ENCODE measurements at regions of chr5 and their contacts with region 1.

Region 1: GRCh38 chr5:11733185-11734184 is 170.8 kb downstream of the CTNND2 start:
- DNase-seq: no peak
- H3K4me3 ChIP-seq: no peak overlapping the region
- CTCF ChIP-seq: no peak

Region 2: DNA sequence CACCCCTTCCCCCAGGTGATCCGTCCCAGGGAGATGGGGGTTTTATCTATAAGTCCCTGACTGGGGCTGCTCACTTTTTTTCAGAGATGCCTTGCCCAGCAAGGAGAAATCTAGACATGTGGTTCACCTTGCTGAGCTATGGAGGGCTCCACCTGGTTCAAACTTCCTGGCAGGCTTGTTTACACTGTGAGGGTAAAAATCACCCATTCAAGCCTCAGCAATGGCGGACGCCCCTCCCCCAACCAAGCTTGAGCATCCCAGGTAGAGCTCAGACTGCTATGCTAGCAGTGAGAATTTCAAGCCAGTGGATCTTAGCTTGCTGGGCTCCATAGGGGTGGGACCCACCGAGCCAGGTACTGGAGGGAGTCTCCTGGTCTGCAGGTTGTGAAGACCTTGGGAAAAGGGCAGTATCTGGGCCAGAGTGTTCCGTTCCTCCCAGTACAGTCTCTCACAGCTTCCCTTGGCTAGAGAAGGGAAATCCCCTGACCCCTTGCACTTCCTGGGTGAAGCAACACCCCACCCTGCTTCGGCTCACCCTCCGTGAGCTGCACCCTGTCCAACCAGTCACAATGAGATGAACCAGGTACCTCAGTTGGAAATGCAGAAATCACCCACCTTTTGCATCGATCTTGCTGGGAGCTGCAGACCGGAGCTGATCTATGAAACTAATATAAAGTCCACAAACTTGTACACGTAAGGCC is 61.0 kb before region 1 on chr5:
- in situ Hi-C with region 1: no loop called
- DNase-seq: no peak
- H3K4me3 ChIP-seq: no peak overlapping the region
- CTCF ChIP-seq: no peak

Region 3: GRCh38 chr5:11801061-11801460 is 67.6 kb after region 1 on chr5:
- in situ Hi-C with region 1: loop called (anchors 5 kb)
- DNase-seq: no peak
- H3K4me3 ChIP-seq: no peak overlapping the region
- CTCF ChIP-seq: no peak

Measured in astrocyte of the cerebellum (primary cell).